ENCODE measurements at regions of chr3 and their contacts with region 1.

Region 1: GRCh38 chr3:149086232-149086988 is at the start of gene HLTF:
- DNase-seq: peak; percentile 92 to 99 (median 94)

Region 2: GRCh38 chr3:148971401-148972163 is 114.8 kb before region 1 on chr3:
- intact Hi-C with region 1: no loop called
- DNase-seq: no peak

Region 3: GRCh38 chr3:148991194-148992026 is 95.0 kb before region 1 on chr3 and contains the start of gene GYG1:
- intact Hi-C with region 1: loop called (anchors 5 kb)
- DNase-seq: peak; percentile 58 to 96 (median 75)

Region 4: GRCh38 chr3:149129326-149130205 is 43.2 kb after region 1 on chr3 and contains the start of gene HPS3:
- intact Hi-C with region 1: loop called (anchors 5 kb)
- DNase-seq: peak; percentile 82 to 99 (median 90)

Measured in posterior cingulate gyrus (tissue), 11 donors.